Activated CD4-positive, alpha-beta memory T cell treated with anti-CD3 and anti-CD28 coated beads for 36 hours (primary cell): ENCODE measurements at regions of chr19 and their contacts with region 1.

Region 1: GRCh38 chr19:49911381-49912145 is 14.9 kb upstream of the IL4I1 start:
- DNase-seq: peak; percentile 72
- H3K4me3 Mint-ChIP-seq: peak overlapping the region; percentile 51
- H3K27ac Mint-ChIP-seq: peak overlapping the region; percentile 97
- H3K4me1 Mint-ChIP-seq: peaks cover 78% of the 10 kb centered on the region
- H3K27me3 Mint-ChIP-seq: no peaks in the 10 kb centered on the region

Region 2: DNA sequence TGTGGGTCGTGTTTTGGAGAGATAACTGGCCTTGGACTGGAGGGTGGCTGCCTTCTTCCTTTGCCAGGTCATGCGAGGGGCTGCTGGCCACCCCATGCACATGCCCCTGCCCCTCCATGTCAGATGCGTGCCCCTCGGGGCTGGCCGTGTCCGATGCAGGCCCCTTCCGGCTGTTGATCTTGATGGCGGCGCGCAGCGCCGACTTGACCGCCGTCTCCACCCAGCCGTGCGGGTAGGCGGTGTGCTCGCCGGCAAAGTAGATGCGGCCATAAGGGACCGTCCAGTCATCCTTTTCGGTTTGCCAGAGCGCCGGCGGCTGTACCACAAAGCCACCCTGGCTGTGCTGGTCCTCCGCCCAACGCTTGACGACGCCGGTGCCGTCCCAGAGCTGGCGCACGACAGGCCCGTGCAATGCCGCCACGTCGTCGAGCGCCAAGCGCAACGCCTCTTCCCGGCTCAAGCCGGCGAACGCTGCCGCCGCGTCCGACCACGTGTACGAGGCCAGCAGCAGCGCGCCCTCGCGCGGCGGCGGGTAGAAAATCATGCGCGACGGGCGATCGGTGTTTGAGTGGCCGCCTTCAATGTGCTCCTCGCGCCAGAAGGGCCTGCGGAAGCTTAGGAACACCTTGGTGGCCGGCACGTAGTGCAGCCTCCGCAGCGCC is 21.7 kb before region 1 on chr19:
- CTCF ChIA-PET with region 1: interaction called, 15 read pairs
- POLR2A ChIA-PET with region 1: interaction called, 77 read pairs
- intact Hi-C with region 1: no loop called
- DNase-seq: peak; percentile 84
- H3K4me3 Mint-ChIP-seq: peak overlapping the region; percentile 69
- H3K27ac Mint-ChIP-seq: peak overlapping the region; percentile 76
- H3K4me1 Mint-ChIP-seq: peaks cover 46% of the 10 kb centered on the region
- H3K27me3 Mint-ChIP-seq: no peaks in the 10 kb centered on the region

Region 3: DNA sequence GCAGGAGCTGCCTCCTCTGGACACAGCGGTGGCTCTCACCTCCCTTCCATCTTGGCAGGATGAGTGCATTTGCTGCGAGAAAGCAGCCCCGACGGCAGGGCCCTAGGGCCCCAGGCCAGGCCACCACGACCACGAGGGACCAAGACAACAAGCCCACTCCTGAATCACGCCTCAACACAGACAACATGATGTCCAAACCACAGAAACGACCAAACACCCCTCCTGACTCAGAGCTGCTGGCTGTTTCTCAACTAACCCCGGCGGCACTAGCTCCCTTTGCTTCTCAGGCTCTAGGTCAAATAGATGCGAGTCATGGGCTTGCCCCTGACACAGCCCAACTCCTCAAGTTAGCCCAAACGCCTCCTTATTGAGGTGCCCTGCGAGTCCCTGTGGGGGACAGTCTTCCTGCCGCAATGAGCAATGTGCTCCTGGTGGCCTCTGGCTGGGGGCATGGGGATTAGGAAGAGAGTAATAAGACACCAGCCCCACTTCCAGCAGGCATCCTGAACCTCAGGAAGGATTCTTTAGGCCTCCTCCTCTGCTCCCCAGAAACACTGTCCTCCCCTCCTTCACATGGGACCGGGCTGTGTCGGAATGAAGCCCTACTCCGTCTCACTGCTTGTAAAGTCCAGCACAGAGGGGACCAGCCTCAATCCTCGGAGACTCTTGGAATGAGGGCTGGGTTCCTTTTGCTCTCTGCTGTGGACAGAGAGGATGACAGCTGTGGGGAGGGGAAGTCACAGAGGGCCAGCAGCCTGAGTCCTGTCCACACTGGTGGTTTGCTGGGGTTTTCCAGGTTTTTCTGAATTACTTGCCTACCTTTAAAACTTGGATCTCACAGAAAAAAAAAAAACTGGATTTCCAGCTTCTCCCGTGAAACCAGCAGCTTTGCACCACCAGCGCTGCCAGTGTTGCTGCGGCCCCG is 10.6 kb after region 1 on chr19:
- CTCF ChIA-PET with region 1: no interaction called
- POLR2A ChIA-PET with region 1: interaction called, 32 read pairs
- intact Hi-C with region 1: no loop called
- DNase-seq: peak; percentile 53
- H3K4me3 Mint-ChIP-seq: no peak overlapping the region
- H3K27ac Mint-ChIP-seq: peak overlapping the region; percentile 82
- H3K4me1 Mint-ChIP-seq: peaks cover 65% of the 10 kb centered on the region
- H3K27me3 Mint-ChIP-seq: no peaks in the 10 kb centered on the region

Region 4: GRCh38 chr19:49929611-49930482 is 18.3 kb after region 1 on chr19:
- CTCF ChIA-PET with region 1: interaction called, 7 read pairs
- POLR2A ChIA-PET with region 1: interaction called, 32 read pairs
- intact Hi-C with region 1: loop called (anchors 2 kb)
- DNase-seq: peak; percentile 96
- H3K4me3 Mint-ChIP-seq: peak overlapping the region; percentile 98
- H3K27ac Mint-ChIP-seq: peak overlapping the region; percentile 98
- H3K4me1 Mint-ChIP-seq: peaks cover 66% of the 10 kb centered on the region
- H3K27me3 Mint-ChIP-seq: peaks cover 5% of the 10 kb centered on the region